Endothelial cell of umbilical vein (primary cell): ENCODE measurements at regions of chr9 and their contacts with region 1.

Region 1: GRCh38 chr9:124852829-124853531 is at the start of gene WDR38:
- DNase-seq: peak; percentile 65
- H3K4me3 ChIP-seq: peak within 1 kb of the TSS; percentile 2 to 38 (median 32)
- H3K27ac ChIP-seq: no peak within 1 kb of the TSS
- H3K4me1 ChIP-seq: peaks cover 3% of the 10 kb centered on the region
- H3K27me3 ChIP-seq: peaks cover 0 to 2% of the 10 kb centered on the region in 2 experiments
- CTCF ChIP-seq: peak; percentile 80 to 94
- POLR2A ChIP-seq: no peak
- total RNA-seq, gene WDR38: not detected in 2 replicates

Region 2: DNA sequence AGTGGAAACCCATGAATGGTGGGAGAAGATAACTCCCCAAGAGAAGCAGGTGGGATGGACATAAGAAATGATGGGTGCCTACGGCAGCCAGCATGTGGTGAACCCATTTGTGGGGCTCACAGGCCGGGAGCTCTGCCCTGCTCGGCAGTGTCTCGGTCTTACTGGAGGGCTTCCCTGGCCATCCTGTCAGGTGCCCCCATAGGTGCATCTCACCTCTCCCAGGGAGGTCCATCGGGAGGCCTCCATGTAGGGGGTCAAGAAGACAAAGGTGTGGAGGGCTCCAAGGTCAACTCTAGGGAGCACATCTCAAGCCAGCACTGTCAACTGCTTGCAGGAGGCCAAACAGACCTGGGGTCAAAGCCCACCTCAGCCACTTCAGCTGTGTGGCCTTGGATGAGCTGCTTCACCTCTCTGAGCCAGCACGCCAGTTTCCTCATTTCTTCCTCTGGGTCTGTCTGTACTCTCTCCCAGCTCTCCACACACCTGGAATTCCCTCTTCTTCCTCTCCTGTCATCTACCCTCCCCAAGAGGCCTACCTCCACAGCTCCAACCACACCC is 413.2 kb before region 1 on chr9:
- CTCF ChIA-PET with region 1: no interaction called
- POLR2A ChIA-PET with region 1: no interaction called
- dilution Hi-C with region 1: no loop called
- intact Hi-C with region 1: no loop called
- DNase-seq: no peak
- H3K4me3 ChIP-seq: no peak overlapping the region
- H3K27ac ChIP-seq: no peak overlapping the region
- H3K4me1 ChIP-seq: no peaks in the 10 kb centered on the region
- H3K27me3 ChIP-seq: peaks cover 0 to 2% of the 10 kb centered on the region in 2 experiments
- CTCF ChIP-seq: no peak
- POLR2A ChIP-seq: no peak

Region 3: DNA sequence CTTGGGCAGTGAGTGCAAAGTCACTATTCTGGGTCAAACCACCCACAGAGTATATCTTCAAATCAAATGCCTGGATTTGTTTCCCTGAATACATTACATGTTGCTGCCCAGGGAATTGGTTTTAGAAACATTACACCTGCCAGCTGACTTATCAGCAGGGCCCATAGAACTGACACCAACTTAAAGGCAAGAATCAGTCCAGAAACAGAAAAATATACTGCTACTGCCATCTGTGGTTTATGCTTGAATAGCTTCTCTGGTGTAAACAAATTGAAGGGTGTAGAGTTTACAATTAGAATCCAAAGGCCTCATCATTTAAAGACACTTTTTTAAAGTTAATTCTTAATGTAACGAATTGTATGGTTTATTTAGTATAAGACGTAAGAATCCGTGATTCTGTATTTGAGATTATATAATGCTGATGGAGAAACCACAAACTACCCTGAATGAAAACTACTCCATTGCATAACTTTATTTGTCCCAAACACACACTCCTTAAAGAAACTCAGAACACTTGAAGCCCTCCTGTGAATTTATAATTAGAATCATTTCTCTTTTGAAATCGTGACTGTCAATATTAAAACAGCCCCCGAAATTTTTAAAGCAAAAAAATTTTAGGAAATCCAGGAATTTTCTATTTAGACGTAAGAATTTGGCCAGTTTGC is 88.1 kb before region 1 on chr9:
- CTCF ChIA-PET with region 1: interaction called, 967 read pairs
- POLR2A ChIA-PET with region 1: no interaction called
- dilution Hi-C with region 1: no loop called
- intact Hi-C with region 1: no loop called
- DNase-seq: peak; percentile 47
- H3K4me3 ChIP-seq: no peak overlapping the region
- H3K27ac ChIP-seq: no peak overlapping the region
- H3K4me1 ChIP-seq: peaks cover 5% of the 10 kb centered on the region
- H3K27me3 ChIP-seq: peaks cover 57 to 91% of the 10 kb centered on the region in 2 experiments
- CTCF ChIP-seq: peak in 1 of 2 donors; percentile 19
- POLR2A ChIP-seq: no peak

Region 4: DNA sequence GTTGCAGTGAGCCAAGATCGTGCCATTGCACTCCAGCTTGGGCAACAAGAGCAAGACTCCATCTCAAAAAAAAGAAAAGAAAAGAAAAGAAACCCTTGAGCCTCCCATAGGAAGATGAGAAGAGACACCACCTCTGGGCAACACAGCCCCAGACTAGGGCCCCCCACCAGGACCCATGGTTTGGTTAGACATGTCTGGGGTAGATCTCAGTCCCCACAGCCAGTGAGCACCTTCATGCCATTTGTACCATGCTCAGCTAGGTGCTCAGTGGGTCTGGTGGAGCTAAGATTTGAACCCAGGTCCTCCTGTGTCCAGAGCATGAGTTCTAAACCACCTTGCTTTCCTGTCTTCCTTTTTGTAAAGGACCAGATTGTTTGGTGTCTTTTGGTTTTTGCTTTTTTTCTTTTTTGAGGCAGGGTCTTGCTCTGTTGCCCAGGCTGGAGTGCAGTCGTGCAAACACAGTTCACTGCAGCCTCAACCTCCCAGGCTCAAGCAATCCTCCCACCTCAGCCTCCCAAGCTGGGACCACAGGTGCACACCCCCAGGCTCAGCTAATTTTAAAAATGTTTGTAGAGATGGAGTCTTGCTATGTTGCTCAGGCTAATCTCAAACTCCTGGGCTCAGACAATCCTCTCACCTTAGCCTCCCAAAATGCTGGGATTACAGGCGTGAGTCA is 64.3 kb before region 1 on chr9:
- CTCF ChIA-PET with region 1: interaction called, 40 read pairs
- POLR2A ChIA-PET with region 1: no interaction called
- dilution Hi-C with region 1: no loop called
- intact Hi-C with region 1: no loop called
- DNase-seq: no peak
- H3K4me3 ChIP-seq: no peak overlapping the region
- H3K27ac ChIP-seq: no peak overlapping the region
- H3K4me1 ChIP-seq: no peaks in the 10 kb centered on the region
- H3K27me3 ChIP-seq: peaks cover 0 to 3% of the 10 kb centered on the region in 2 experiments
- CTCF ChIP-seq: no peak
- POLR2A ChIP-seq: no peak

Region 5: DNA sequence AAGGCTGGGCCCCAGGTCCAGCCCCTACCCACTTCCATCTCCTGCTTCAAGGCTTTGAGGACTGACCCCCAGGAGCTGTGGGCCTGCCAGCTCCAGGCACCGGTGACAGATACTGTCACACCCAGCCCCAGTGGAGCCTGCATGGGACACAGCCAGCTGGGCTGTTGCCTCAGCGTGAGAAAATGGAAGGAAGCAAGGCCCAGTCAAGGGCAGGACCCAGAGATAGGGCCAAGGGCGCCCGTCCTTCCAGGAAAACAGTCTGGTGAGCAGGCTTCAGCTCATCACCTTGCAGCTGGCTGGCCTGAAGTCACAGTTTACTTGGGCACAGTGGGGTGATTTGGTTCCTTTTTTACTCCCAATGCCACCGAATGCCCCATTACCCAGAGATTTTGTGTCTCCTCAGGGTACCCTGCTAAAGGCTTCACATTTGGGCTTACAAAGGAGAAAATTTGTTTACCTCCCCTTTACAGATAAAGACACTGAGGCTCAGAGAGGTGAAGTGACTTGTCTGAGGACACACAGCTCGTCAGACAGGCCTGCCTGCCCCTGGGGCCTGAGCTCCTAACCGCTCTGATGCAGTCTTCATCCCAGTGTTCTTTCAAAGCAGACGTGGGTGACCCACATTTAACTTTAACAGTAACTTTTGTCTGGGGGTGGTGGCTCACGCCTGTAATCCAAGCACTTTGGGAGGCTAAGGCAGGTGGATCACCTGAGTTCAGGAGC is 21.2 kb before region 1 on chr9:
- CTCF ChIA-PET with region 1: interaction called, 141 read pairs
- POLR2A ChIA-PET with region 1: no interaction called
- dilution Hi-C with region 1: no loop called
- intact Hi-C with region 1: no loop called
- DNase-seq: no peak
- H3K4me3 ChIP-seq: no peak overlapping the region
- H3K27ac ChIP-seq: no peak overlapping the region
- H3K4me1 ChIP-seq: peaks cover 10% of the 10 kb centered on the region
- H3K27me3 ChIP-seq: peaks cover 0 to 3% of the 10 kb centered on the region in 2 experiments
- CTCF ChIP-seq: no peak
- POLR2A ChIP-seq: no peak

Region 6: GRCh38 chr9:124894741-124895170 is 41.8 kb after region 1 on chr9:
- CTCF ChIA-PET with region 1: interaction called, 13 read pairs
- POLR2A ChIA-PET with region 1: no interaction called
- dilution Hi-C with region 1: no loop called
- intact Hi-C with region 1: loop called (anchors 1 kb)
- DNase-seq: peak; percentile 57
- H3K4me3 ChIP-seq: no peak overlapping the region
- H3K27ac ChIP-seq: no peak overlapping the region
- H3K4me1 ChIP-seq: no peaks in the 10 kb centered on the region
- H3K27me3 ChIP-seq: no peaks in the 10 kb centered on the region
- CTCF ChIP-seq: peak; percentile 43 to 58
- POLR2A ChIP-seq: no peak